A673 (cell line): ENCODE measurements at regions of chr7 and their contacts with region 1.

Region 1: DNA sequence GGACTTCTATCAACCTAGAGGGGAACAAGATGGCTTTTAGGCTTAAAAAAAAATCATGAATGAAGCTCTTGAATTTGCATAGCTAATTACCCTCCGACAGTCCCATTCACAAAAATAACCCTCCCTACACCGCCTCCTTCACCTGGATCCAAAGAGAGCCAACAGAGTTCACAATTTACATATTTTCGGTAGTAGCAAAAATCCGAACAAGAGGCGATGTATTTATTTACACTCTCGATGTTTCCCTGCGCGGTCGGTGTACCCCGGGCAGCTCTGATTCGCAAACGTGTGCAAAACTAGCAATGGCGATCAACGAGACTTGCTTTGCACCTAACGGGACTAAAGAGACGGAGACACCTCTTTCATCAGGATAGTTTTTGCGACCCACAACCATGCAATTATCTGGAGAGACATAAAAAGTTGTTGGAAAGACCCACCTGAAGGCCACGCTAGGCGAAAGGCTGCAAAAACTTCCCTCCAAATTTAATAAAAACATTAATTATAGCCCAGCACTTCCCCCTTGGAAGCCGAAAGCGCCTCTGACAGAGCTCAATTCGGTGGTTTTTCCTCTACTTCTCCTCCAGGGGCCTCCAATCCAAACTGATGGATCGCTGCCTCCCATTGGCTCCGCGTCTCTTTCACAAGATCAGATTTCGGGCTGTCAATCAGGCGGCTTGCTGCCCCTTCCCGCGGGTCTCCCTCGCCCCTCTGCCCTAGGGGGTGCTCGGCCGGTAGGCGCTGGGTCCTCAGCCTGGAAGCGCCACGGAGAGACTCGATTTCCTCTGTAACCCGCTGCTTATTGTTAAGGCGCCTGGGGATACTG is at the start of gene ETV1:
- DNase-seq: peak; percentile 92
- H3K4me3 ChIP-seq: peak within 1 kb of the TSS; percentile 62
- H3K27ac ChIP-seq: peak within 1 kb of the TSS; percentile 83
- H3K4me1 ChIP-seq: peaks cover 31% of the 10 kb centered on the region
- H3K27me3 ChIP-seq: no peaks in the 10 kb centered on the region
- CTCF ChIP-seq: peak; percentile 55
- total RNA-seq, gene ETV1: 60.1 and 84.1 TPM in 2 replicates

Region 2: GRCh38 chr7:13524076-13524475 is 465.3 kb before region 1 on chr7:
- CTCF ChIA-PET with region 1: no interaction called
- POLR2A ChIA-PET with region 1: no interaction called
- intact Hi-C with region 1: loop called (anchors 5 kb)
- DNase-seq: no peak
- H3K4me3 ChIP-seq: no peak overlapping the region
- H3K27ac ChIP-seq: no peak overlapping the region
- H3K4me1 ChIP-seq: peaks cover 4% of the 10 kb centered on the region
- H3K27me3 ChIP-seq: no peaks in the 10 kb centered on the region
- CTCF ChIP-seq: no peak

Region 3: DNA sequence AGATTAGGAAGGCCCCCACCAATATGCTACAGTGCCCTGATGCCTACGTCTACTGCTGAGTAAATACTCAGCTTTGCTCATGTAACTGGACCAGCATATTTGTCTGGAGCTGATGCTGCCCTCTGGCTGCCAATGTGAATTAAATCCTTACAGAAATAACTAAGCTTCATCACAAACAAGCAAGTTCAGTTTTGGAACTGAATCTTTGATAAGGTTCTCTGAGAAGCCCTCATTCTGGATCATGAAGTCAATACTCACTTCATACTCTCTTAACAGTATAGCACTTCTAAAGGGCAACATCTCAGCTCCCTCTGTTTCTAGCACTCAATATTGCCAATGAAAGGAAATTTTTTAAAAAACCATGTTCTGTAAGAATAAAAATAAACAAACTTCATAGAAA is 246.5 kb before region 1 on chr7:
- CTCF ChIA-PET with region 1: no interaction called
- POLR2A ChIA-PET with region 1: no interaction called
- intact Hi-C with region 1: loop called (anchors 10 kb)
- DNase-seq: peak; percentile 68
- H3K4me3 ChIP-seq: no peak overlapping the region
- H3K27ac ChIP-seq: no peak overlapping the region
- H3K4me1 ChIP-seq: no peaks in the 10 kb centered on the region
- H3K27me3 ChIP-seq: no peaks in the 10 kb centered on the region
- CTCF ChIP-seq: peak; percentile 71

Region 4: DNA sequence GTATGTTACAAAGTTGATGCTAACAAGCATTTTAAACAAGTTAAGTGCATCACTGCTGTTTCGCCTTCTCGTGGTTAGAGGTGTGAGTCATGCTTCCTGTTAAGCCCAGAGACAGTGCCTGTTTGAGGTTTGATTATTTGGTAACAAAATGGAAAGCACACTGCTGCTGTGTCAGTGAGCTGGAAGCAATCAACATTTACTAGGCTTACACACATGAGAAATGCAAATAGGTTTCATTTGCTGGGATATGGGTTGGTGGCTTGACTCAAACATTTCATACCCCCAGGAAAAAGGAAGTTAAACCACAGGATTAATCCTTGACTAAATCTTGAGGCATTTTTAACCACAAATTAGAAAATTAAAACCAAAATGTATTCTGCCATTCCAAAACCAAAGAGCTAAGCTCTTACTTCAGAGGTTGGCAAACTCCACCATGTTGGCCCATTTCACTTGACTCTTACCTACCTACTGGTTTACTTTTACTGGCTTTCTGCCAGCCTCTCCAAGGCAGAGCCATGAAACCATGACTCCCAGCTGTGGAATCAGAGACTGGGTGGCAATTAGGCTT is 139.1 kb before region 1 on chr7:
- CTCF ChIA-PET with region 1: no interaction called
- POLR2A ChIA-PET with region 1: no interaction called
- intact Hi-C with region 1: loop called (anchors 2 kb)
- DNase-seq: peak; percentile 98
- H3K4me3 ChIP-seq: peak overlapping the region; percentile 14
- H3K27ac ChIP-seq: peak overlapping the region; percentile 93
- H3K4me1 ChIP-seq: peaks cover 46% of the 10 kb centered on the region
- H3K27me3 ChIP-seq: no peaks in the 10 kb centered on the region
- CTCF ChIP-seq: no peak

Region 5: GRCh38 chr7:13908667-13909397 is 80.5 kb before region 1 on chr7:
- CTCF ChIA-PET with region 1: no interaction called
- POLR2A ChIA-PET with region 1: no interaction called
- intact Hi-C with region 1: loop called (anchors 5 kb)
- DNase-seq: peak; percentile 90
- H3K4me3 ChIP-seq: no peak overlapping the region
- H3K27ac ChIP-seq: peak overlapping the region; percentile 46
- H3K4me1 ChIP-seq: peaks cover 81% of the 10 kb centered on the region
- H3K27me3 ChIP-seq: no peaks in the 10 kb centered on the region
- CTCF ChIP-seq: no peak

Region 6: DNA sequence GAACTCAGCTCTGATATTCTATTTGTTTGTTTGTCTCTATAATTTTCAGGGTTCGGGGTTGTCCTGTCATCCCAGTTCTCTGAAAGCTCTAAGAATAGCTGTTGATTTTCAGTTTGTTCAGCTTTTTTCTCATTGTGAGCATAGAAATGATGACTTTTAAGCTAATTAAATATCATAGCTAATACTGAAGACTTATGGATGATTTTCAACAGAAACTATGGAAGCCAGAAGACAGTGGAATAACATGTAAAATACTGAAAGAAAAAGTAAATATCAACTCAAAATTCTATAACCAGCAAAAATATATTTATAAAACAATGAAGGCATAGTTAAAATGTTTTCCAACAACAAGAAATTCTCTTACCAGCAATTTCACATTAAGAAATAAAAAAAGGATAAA is 96.6 kb after region 1 on chr7:
- CTCF ChIA-PET with region 1: no interaction called
- POLR2A ChIA-PET with region 1: no interaction called
- intact Hi-C with region 1: no loop called
- DNase-seq: no peak
- H3K4me3 ChIP-seq: no peak overlapping the region
- H3K27ac ChIP-seq: no peak overlapping the region
- H3K4me1 ChIP-seq: no peaks in the 10 kb centered on the region
- H3K27me3 ChIP-seq: no peaks in the 10 kb centered on the region
- CTCF ChIP-seq: no peak

Region 7: GRCh38 chr7:14340393-14341074 is 351.2 kb after region 1 on chr7:
- CTCF ChIA-PET with region 1: no interaction called
- POLR2A ChIA-PET with region 1: no interaction called
- intact Hi-C with region 1: loop called (anchors 10 kb)
- DNase-seq: peak; percentile 75
- H3K4me3 ChIP-seq: no peak overlapping the region
- H3K27ac ChIP-seq: no peak overlapping the region
- H3K4me1 ChIP-seq: peaks cover 15% of the 10 kb centered on the region
- H3K27me3 ChIP-seq: peaks cover 27% of the 10 kb centered on the region
- CTCF ChIP-seq: no peak

Region 8: DNA sequence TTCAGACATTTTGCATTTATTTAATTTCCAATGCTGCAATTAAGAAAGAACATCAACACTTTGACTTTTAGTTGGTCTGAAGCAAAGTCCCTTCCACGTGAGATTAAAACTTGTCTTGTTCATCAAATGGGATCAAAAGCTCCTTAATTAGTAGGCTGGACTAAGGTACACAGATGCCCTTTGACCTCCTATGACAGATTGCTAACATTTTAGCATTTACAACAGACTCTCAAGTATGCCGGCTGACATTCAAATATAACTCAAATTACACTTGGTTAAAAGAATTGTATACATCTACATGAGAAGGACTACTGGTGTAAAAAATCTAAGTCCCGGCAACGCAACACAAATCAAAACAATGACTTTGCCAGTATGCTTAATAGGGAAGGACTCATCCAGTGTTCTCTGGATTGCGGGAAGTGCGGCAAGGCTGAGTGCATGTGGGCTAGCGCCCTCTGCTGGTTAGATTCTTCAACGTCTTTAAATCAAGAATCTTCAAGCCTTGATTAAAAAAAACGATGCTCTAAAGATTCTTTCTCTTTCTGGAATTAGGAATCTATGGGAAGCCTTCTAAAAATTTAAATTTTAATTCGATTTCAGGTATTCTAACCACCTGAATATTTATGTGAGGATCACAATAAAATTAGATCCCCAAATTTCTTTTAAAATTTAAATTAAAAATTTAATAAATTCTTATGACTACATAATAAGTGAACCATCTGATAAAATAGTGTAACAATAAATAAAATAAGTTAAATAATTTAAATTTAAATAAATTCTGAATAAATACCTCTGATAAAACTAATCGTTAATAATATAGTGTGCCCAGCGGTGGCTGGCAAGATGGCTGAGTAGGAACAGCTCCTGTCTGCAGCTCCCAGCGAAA is 468.5 kb after region 1 on chr7:
- CTCF ChIA-PET with region 1: no interaction called
- POLR2A ChIA-PET with region 1: no interaction called
- intact Hi-C with region 1: loop called (anchors 5 kb)
- DNase-seq: peak; percentile 88
- H3K4me3 ChIP-seq: peak overlapping the region; percentile 15
- H3K27ac ChIP-seq: no peak overlapping the region
- H3K4me1 ChIP-seq: no peaks in the 10 kb centered on the region
- H3K27me3 ChIP-seq: no peaks in the 10 kb centered on the region
- CTCF ChIP-seq: peak; percentile 86